PC-9 (cell line): ENCODE measurements at regions of chr1 and their contacts with region 1.

Region 1: GRCh38 chr1:33472349-33472980 is at the start of gene ZSCAN20:
- DNase-seq: peak; percentile 92 to 96
- H3K4me3 ChIP-seq: peak within 1 kb of the TSS; percentile 66
- H3K27ac ChIP-seq: no peak within 1 kb of the TSS
- H3K4me1 ChIP-seq: peaks cover 10% of the 10 kb centered on the region
- H3K27me3 ChIP-seq: no peaks in the 10 kb centered on the region
- CTCF ChIP-seq: no peak
- total RNA-seq, gene ZSCAN20: 6.0 and 6.4 TPM in 2 replicates

Region 2: DNA sequence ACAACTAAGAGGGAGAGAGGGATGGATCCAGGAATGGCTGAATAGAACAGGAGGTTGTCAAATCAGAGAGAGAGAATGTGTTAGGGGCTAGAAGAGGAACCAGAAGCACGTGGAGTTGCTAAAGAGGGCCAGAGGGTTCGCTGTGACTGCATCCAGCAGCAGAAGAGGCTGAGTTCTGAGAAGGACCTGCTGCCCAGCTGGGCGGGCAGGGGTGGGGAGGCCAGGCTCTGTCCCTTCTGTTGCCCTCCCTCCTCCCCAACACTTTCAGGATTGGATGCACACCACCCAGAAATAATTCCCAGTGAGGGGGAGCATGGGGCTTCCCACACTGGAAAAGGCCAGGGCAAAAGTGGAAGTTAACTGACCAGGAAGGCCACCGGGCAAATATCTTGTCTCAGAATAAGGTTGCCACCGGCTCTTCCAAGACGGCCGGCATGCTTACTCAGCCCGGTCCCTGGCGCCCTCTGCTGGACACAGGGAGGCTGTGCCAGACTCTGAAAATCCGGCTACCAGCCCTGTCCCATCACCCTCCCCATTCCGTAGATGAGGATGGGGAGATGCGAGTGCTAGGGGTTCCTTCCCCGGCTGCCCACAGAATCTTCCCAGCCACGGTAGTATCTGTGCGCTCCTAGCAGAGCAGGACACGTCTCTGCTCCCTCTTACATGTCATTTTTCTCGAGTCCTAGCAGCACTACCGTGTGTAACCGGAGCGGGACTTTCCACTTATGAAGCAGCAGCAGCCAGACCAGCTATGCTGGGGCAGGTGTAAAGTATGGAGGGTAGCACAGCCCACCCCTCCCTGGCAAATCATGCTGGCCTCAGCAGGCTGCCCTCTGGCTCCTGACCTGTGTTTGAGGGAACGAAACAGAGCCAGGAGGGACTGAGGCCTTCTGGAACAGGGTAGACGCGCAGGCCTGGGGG is 104.7 kb before region 1 on chr1:
- CTCF ChIA-PET with region 1: no interaction called
- POLR2A ChIA-PET with region 1: no interaction called
- intact Hi-C with region 1: loop called (anchors 5 kb)
- DNase-seq: peak; percentile 48 to 80
- H3K4me3 ChIP-seq: no peak overlapping the region
- H3K27ac ChIP-seq: no peak overlapping the region
- H3K4me1 ChIP-seq: no peaks in the 10 kb centered on the region; the same call in 1 of the 2 replicates
- H3K27me3 ChIP-seq: no peaks in the 10 kb centered on the region
- CTCF ChIP-seq: peak; percentile 94

Region 3: DNA sequence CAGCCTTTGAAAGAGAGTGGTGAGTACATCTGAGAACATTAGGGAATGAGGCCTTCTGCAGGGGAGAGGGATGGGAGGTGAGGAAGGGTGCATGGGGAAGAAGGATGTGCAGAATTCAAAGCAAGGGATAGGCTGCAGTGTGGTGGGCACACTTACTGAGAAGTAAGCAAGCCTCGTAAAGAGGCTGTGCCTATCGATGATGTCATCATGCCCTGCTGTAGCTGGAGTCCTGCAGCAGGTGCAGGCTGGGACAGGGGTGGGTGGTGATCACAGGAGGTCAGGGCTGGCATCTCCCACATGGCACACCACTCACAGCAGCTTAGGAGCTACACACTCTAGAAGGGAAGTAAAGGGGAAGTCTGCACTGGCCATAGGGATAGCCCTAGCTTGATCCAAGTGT is 16.2 kb after region 1 on chr1:
- CTCF ChIA-PET with region 1: no interaction called
- POLR2A ChIA-PET with region 1: no interaction called
- intact Hi-C with region 1: no loop called
- DNase-seq: no peak
- H3K4me3 ChIP-seq: no peak overlapping the region
- H3K27ac ChIP-seq: no peak overlapping the region
- H3K4me1 ChIP-seq: no peaks in the 10 kb centered on the region
- H3K27me3 ChIP-seq: no peaks in the 10 kb centered on the region
- CTCF ChIP-seq: no peak

Region 4: GRCh38 chr1:33541966-33542365 is 69.5 kb after region 1 on chr1:
- CTCF ChIA-PET with region 1: no interaction called
- POLR2A ChIA-PET with region 1: no interaction called
- intact Hi-C with region 1: no loop called
- DNase-seq: no peak
- H3K4me3 ChIP-seq: no peak overlapping the region
- H3K27ac ChIP-seq: no peak overlapping the region
- H3K4me1 ChIP-seq: no peaks in the 10 kb centered on the region
- H3K27me3 ChIP-seq: peaks cover 88% of the 10 kb centered on the region
- CTCF ChIP-seq: no peak